ENCODE measurements at regions of chr7 and their contacts with region 1.

Region 1: DNA sequence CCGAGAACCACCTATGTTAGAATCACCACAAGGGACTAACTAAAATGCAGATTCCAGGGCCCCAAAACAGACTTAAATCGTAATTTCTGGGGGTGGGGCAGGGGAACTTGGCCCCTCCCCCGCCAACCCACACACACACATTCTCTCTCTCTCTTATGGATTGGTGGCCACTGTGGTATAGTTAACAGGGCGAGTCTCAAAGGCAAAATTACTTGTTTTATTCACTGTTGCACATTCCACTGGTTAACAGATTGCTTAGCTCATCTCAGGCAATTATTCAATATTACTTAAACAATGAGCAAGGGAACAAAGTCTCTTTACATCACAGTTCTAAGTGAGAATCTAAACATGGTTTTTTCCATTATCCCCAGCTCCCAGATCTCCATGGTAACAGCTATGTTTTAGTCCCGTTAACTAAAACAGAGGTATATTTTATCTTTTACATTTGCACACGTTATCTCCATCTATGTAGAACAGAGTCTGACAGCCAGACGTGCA is 38.5 kb downstream of the IGF2BP3 start:
- DNase-seq: no peak
- ATAC-seq: no peak
- H3K4me3 ChIP-seq: no peak overlapping the region
- H3K27ac ChIP-seq: peak overlapping the region; percentile 17
- H3K4me1 ChIP-seq: peaks cover 28% of the 10 kb centered on the region
- H3K27me3 ChIP-seq: no peaks in the 10 kb centered on the region
- CTCF ChIP-seq: no peak
- EP300 ChIP-seq: no peak
- POLR2A ChIP-seq: no peak
- RAD21 ChIP-seq: no peak

Region 2: DNA sequence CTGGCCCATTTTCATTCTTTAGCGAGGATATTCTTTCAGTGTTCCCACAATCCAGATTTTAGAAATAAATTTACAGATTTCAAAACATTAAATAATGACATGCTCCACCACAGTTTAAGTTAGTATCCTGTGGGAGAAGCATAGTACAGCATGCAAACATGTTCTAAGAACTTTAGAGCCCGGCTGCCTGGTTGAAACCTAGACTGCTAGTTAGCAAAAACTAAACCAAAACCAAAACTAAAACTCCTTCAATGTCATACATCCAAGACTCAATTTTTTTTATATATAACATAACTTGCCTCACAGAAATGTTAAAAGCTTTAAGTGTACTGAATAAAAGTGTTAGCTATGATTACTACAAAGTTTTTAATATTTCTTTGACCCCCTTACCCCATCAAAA is 83.0 kb after region 1 on chr7:
- CTCF ChIA-PET with region 1: no interaction called
- POLR2A ChIA-PET with region 1: interaction called, 3 read pairs
- in situ Hi-C with region 1: loop called (anchors 5 kb)
- intact Hi-C with region 1: no loop called
- DNase-seq: no peak
- ATAC-seq: no peak
- H3K4me3 ChIP-seq: no peak overlapping the region
- H3K27ac ChIP-seq: no peak overlapping the region
- H3K4me1 ChIP-seq: no peaks in the 10 kb centered on the region
- H3K27me3 ChIP-seq: no peaks in the 10 kb centered on the region
- CTCF ChIP-seq: no peak
- EP300 ChIP-seq: no peak
- POLR2A ChIP-seq: no peak
- RAD21 ChIP-seq: no peak

Region 3: DNA sequence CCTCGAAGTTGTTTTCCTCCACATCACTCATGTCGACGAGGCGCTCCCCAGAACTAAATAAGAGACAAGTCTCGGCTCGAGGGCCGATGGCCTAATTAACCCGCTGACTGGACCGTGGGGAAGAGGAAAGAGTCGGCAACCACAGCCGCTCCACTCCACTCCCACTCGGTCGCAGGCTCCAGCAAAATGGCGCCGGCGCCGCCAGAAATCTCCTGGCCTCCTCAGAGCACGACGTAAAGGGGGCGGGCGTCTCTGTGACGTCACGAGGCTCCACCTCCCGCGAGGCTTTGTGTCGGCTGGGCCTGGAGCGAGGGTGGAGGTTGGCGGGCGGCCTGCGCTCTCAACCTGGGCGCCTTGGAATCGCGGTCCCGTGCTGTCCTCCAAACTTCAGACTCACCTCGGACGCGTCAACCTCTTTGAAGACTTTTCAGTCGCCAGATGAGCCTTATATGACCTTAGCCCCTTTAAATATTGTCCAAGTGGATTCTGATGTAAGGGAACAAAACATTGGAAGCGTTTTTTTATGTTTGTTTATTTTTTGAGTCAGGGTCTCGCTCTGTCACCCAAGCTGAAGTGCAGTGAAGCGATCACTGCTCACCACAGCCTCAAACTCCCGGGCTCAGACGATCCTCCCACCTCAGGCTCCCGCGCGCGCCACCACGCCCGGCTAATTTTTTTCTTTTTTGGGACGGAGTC is 100.2 kb after region 1 on chr7 and contains the start of gene TRA2A:
- CTCF ChIA-PET with region 1: no interaction called
- POLR2A ChIA-PET with region 1: no interaction called
- in situ Hi-C with region 1: no loop called
- intact Hi-C with region 1: loop called (anchors 5 kb)
- DNase-seq: peak; percentile 90
- ATAC-seq: peak; percentile 95
- H3K4me3 ChIP-seq: peak within 1 kb of the TSS; percentile 73 to 98 (median 98)
- H3K27ac ChIP-seq: peak within 1 kb of the TSS; percentile 95
- H3K4me1 ChIP-seq: peaks cover 37% of the 10 kb centered on the region
- H3K27me3 ChIP-seq: no peaks in the 10 kb centered on the region; a peak in 1 of 5 replicates
- CTCF ChIP-seq: no peak; the same call in 1 of the 2 replicates
- EP300 ChIP-seq: no peak
- POLR2A ChIP-seq: peak; percentile 98 to 99
- RAD21 ChIP-seq: no peak; the same call in 1 of the 2 replicates
- total RNA-seq, gene TRA2A: 39.1 and 52.7 TPM in 2 replicates

Measured in HepG2 (cell line).